Cardiac septum (tissue), 1 donor: ENCODE measurements at regions of chr3 and their contacts with region 1.

Region 1: DNA sequence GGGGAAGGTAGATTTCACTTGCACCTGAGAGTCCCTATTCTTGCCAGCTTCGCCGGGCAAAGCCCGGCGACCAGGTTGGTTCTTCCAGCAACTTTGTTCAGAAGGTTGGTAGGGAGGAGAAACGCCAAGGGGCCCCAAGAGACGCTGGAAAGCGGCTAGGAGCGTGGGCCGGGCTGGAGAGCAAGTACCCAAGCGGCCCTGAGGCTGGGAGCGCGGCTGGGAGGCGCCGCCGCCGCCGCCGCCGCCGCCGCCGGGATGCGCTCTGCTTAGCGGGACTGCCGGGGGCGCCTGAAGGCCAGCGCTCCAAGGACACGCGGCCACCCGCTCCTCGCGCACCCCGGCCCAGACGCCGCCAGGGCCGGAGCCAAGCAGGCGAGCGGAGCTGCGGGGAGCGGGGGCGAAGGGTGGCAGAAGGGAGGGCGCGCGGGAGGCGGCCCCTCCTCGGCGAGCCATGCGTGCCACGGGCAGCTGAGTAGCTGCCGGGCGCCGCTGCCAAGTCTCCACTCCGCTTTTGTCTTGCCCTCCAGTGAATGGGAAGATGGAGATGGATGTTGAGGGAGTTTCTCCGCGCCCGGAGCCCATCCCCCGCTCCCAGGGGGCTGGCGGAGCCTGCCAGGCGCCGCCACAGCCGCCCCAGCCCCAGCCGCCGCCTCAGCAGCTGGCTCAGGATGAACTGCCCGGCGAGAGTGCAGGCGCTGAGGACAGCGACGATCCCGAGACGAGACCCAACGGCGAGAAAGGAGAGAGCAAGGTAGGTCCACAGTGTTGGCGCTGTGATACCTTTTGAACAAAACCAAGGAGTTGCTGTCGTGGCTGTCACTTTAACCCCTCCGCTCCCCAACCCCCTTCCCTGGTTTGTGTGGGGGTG is 227.4 kb upstream of the AZI2 start:
- DNase-seq: no peak

Region 2: GRCh38 chr3:28739647-28740046 is 163.7 kb after region 1 on chr3:
- intact Hi-C with region 1: loop called (anchors 10 kb)
- DNase-seq: no peak

Region 3: DNA sequence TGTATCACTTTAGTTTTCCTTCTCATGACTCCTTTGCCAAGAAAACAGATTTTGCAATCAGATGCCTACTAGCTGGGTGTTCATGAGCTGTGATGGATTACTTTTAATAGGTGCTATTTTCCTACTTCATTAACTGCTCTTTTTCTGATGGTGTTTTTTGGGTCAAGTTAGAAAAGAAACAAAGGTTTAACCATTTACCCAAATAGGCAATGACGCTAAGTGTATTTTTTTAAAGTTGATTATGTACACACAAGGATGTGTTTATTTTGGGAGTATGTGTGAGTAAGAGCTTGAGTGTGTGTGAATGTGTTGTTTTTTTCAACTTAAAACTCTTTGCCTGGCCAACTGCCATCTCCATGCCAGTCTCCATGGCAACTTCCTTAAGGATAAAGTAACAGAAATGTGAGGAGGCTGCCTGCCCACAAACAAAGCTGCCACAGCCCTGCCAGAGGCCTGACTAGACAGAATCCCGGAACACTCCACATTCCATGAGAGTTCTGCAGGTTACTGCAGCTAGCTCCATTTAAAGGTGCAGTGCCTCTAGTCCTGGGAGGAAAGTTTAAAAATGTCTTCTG is 489.3 kb after region 1 on chr3:
- intact Hi-C with region 1: loop called (anchors 10 kb)
- DNase-seq: no peak